ENCODE measurements at regions of chr14 and their contacts with region 1.

Region 1: GRCh38 chr14:63896278-63896720 is 43.5 kb downstream of the SYNE2 start:
- DNase-seq: peak; percentile 99
- H3K4me3 ChIP-seq: peak overlapping the region in 1 of 3 experiments; percentile 28
- H3K27ac ChIP-seq: peak overlapping the region; percentile 57
- H3K4me1 ChIP-seq: peaks cover 34% of the 10 kb centered on the region
- H3K27me3 ChIP-seq: no peaks in the 10 kb centered on the region
- CTCF ChIP-seq: no peak
- POLR2A ChIP-seq: no peak

Region 2: DNA sequence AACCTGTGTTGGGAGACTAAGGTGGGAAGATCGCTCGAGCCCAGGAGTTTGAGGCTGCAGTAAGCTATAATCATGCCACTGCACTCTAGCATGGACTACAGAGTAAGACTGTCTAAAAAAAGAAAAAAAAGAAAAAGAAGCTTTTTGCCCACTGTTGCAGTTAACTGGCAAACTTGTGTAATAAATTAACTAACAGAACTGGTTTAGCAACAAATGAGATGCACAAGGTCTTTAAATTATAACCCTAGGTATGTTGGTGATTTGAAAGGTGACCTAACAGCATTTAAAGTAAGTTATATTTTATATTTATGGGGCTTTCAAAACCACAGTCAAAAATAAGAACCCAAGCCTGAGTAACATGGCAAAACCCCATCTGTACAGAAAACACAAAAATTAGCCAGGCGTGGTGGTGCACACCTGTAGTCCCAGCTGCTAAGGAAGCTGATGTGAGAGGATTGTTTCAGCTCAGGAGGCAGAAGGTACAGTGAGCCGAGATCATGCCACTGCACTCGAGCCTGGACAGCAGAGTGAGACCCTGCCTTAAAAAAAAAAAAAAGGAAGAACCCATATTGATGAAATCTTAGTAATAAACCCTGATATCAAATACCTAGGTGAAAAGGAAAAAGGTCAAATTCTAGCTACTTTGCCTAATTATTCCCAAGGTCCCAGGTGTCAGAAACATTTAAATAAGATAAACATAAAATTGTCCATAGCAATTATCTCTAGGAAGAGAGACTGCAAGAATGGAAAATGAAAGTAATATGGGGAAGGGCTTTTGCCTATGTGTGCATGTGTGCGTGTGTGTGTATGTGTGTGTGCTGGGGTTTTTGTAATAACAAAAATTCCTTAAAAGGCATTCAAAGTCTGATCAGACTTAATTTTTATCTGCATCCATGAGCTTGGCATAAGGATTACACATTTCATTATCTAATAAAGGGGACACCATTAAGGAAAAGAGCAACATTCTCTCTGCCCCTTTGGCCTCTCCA is 28.1 kb before region 1 on chr14:
- CTCF ChIA-PET with region 1: interaction called, 3 read pairs
- POLR2A ChIA-PET with region 1: no interaction called
- dilution Hi-C with region 1: no loop called
- intact Hi-C with region 1: loop called (anchors 1 kb)
- DNase-seq: peak; percentile 55
- H3K4me3 ChIP-seq: no peak overlapping the region
- H3K27ac ChIP-seq: no peak overlapping the region
- H3K4me1 ChIP-seq: peaks cover 3% of the 10 kb centered on the region
- H3K27me3 ChIP-seq: no peaks in the 10 kb centered on the region
- CTCF ChIP-seq: no peak
- POLR2A ChIP-seq: no peak

Region 3: DNA sequence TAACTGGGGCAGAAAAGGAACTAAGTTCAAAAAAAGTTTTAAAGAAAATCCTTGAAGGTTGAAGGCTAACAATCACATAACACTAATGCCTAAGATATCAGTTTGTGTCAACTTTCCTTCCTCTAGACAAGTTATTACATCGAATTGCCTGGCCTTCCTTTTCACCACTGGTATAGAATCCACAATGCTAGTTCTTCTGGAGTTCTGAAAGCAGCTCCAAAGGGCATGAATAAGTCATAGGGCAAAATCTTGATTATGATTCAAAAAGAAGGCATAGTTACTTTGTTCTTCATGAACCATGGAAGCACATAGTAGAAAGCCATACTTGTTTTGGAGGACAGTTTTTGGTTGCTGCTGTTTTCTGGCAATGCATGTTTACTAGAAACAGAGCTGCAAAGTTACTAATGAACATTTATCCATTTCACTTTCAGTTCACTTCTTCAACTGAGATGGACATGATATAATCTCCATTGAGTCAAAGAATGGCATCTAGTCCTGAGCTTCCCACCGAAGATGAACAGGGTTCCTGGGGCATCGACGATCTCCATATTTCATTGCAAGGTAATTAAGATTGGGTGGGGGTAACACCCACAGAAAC is 12.5 kb after region 1 on chr14:
- CTCF ChIA-PET with region 1: interaction called, 10 read pairs
- POLR2A ChIA-PET with region 1: interaction called, 3 read pairs
- dilution Hi-C with region 1: no loop called
- intact Hi-C with region 1: no loop called
- DNase-seq: peak; percentile 63
- H3K4me3 ChIP-seq: peak overlapping the region in 2 of 3 experiments; percentile 7 to 19
- H3K27ac ChIP-seq: no peak overlapping the region
- H3K4me1 ChIP-seq: peaks cover 2% of the 10 kb centered on the region
- H3K27me3 ChIP-seq: no peaks in the 10 kb centered on the region
- CTCF ChIP-seq: no peak
- POLR2A ChIP-seq: no peak

Measured in endothelial cell of umbilical vein (primary cell).